ENCODE measurements at regions of chr12 and their contacts with region 1.

Region 1: DNA sequence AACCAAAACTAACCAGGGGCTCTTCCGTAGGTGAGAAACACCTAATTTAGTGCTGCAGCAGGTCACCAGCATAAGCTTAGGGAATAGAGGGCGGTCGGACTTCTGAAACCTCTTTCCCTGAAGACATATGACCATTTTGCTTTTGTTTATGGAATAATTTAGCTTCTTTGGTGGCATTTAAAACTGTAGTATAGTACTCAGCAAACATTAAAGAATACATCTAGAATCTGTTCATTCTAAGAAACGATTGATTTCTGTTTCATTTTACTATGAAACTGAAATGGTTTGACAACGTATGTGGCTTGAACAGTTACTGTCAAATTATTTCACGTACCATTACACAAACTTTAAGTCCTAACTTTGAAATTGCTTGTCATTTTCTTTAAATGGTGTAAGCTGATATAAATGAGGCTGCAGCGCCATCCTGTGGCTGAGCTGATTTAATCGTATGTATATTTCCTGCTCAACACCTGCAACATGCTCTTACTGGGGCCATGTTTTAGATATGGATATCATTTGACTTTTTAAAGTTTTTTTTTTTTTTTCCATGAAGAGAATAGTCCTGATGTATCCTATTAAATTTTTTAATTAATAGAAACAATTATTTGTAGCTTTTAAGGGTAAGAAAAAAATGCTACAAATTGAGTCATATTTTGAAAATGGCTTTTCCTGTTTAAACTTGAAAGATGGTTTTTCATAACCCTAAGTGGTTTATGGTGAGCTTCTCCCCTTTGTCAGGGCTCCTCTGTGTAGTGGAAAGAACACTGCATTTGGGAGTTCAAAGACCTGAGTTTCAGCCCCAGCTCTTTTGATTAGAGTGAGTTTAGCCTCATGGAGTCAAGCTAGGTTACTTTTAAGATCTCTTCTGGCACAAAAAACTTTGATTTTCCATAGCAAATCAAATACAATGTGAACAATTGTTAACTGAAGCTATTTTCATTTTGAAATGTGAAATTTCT is 27.4 kb downstream of the CFAP54 start:
- DNase-seq: peak; percentile 83
- ATAC-seq: peak; percentile 71

Region 2: GRCh38 chr12:96061864-96062453 is 454.8 kb before region 1 on chr12:
- intact Hi-C with region 1: loop called (anchors 2 kb)
- DNase-seq: peak; percentile 72
- ATAC-seq: peak; percentile 92

Region 3: GRCh38 chr12:96219698-96220206 is 297.0 kb before region 1 on chr12:
- intact Hi-C with region 1: loop called (anchors 10 kb)
- DNase-seq: no peak
- ATAC-seq: no peak

Region 4: GRCh38 chr12:96230646-96231045 is 286.1 kb before region 1 on chr12:
- intact Hi-C with region 1: no loop called
- DNase-seq: no peak
- ATAC-seq: no peak

Measured in Right ventricle myocardium superior (tissue), 1 donor.